Activated CD4-positive, alpha-beta memory T cell treated with anti-CD3 and anti-CD28 coated beads for 36 hours (primary cell): ENCODE measurements at regions of chr11 and their contacts with region 1.

Region 1: DNA sequence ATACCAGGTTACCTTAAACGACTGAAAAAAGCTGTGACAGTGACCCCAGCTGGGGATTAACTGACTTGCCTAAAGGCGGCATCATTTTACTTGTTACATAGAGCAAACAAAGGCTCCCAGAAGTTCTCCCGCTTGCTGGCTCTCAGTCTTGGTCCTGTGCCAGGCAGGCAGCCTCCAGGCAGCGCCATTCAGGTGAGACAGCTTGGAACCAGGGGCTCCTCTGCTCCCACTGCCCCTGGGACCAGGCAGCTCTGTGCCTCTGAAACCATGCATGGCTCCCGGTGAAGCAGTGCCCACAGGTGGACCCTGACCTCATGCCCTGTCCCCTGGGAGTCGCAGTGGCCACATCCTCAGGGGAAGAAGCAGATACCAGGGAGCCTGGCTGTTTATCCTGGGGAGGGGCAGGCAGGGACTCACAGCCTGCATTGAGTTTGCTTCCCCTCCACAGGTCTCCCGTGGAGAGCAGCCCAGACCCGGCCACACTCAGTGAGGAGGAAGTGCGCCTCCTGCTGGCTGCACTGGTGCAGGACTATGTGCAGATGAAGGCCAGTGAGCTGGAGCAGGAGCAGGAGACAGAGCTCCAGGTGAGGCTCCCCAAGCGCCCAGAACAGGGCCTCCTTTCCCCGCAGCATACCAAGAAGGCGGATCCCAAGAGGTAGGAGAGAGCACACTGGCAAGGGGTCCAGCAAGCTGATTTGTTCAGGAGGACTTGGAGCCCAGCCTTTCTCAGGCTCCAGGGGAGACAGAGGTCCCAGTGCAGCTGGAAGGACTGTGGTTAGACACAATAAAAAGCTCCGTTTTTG is 15.6 kb upstream of the CYP2R1 start:
- DNase-seq: peak; percentile 91
- H3K4me3 Mint-ChIP-seq: no peak overlapping the region
- H3K27ac Mint-ChIP-seq: no peak overlapping the region
- H3K4me1 Mint-ChIP-seq: peaks cover 36% of the 10 kb centered on the region
- H3K27me3 Mint-ChIP-seq: no peaks in the 10 kb centered on the region

Region 2: DNA sequence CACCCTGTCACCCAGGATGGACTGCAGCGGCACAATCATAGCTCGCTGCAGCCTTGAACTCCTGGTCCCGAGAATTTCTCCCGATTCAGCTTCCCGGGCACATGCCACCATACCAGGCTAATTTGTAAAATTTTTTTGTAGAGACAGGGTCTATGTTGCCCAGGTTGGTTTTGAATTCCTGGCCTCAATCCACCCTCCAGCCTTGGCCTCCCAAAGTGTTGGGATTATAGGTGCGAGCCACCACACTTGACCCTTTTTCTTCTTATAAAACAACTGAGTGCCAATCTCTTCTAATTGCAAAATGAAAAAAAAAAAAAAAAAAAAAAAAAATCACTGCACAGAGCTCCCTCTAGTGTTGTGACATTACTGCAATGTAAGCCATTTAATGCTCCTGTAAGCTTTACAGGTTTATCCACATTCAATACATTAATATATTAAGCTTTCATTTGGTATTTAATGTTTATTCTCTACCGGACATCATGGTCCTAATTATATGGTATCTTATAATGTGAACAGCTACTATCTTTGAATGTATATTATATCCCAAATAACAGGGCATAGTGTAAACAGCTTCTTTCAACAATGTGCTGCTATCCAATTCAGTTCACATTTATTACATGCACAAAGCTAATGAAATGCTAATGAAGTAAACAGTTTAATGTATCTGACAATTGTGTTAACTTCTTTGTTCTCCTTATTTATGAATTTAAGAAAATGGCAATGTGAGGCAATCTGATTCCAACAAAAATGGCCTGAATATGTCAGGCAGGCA is 452.6 kb before region 1 on chr11:
- CTCF ChIA-PET with region 1: interaction called, 10 read pairs
- POLR2A ChIA-PET with region 1: no interaction called
- intact Hi-C with region 1: no loop called
- DNase-seq: no peak
- H3K4me3 Mint-ChIP-seq: no peak overlapping the region
- H3K27ac Mint-ChIP-seq: no peak overlapping the region
- H3K4me1 Mint-ChIP-seq: no peaks in the 10 kb centered on the region
- H3K27me3 Mint-ChIP-seq: no peaks in the 10 kb centered on the region

Region 3: GRCh38 chr11:14578541-14578956 is 329.1 kb before region 1 on chr11:
- CTCF ChIA-PET with region 1: interaction called, 13 read pairs
- POLR2A ChIA-PET with region 1: no interaction called
- intact Hi-C with region 1: no loop called
- DNase-seq: peak; percentile 66
- H3K4me3 Mint-ChIP-seq: peak overlapping the region; percentile 54
- H3K27ac Mint-ChIP-seq: peak overlapping the region; percentile 86
- H3K4me1 Mint-ChIP-seq: peaks cover 49% of the 10 kb centered on the region
- H3K27me3 Mint-ChIP-seq: no peaks in the 10 kb centered on the region

Region 4: GRCh38 chr11:14588681-14589210 is 318.9 kb before region 1 on chr11:
- CTCF ChIA-PET with region 1: no interaction called
- POLR2A ChIA-PET with region 1: no interaction called
- intact Hi-C with region 1: no loop called
- DNase-seq: no peak
- H3K4me3 Mint-ChIP-seq: no peak overlapping the region
- H3K27ac Mint-ChIP-seq: no peak overlapping the region
- H3K4me1 Mint-ChIP-seq: peaks cover 16% of the 10 kb centered on the region
- H3K27me3 Mint-ChIP-seq: no peaks in the 10 kb centered on the region

Region 5: DNA sequence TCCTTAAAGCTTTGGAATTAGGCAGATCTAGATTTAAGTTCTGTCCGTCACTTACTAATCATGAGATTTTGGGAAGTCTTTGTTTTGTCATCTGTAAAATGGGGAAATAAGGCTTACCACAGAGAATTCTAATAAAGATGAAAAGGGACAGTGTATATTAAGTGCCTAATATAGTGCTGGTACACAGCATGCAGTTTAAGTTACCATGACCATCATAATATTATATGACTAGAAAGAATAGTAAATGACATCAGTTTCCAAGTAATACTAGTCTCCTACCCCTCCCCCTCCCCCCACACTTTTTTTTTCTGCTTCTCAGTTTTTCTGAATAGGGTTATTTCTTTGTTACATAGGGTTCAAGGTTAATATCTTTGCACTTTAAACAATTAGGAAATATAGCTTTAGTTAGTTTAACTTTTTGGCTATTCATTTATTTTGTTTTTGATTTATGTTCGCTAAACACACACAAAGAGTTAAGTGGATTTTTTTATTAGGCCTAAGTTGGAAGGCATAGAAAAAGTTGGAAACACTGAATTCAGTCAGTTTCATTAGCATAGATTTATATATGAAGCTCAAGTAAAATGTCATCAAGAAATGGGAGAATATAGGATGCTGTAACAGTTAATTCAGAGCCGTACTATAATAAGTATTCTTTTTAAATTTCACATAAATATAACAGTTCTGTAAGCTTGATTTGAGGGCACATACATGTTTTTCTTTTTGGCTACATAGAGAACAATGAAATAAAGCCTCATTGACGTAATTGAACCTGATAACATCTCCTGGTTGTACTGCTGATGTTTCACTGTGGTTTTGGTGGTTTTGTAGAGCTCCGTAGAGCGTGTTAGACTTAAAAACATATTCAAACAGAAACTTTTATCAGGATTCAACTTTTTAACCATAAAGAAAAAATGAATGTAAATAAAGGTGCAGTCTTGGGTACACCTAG is 142.8 kb before region 1 on chr11:
- CTCF ChIA-PET with region 1: interaction called, 20 read pairs
- POLR2A ChIA-PET with region 1: no interaction called
- intact Hi-C with region 1: no loop called
- DNase-seq: peak; percentile 31
- H3K4me3 Mint-ChIP-seq: peak overlapping the region; percentile 48
- H3K27ac Mint-ChIP-seq: no peak overlapping the region
- H3K4me1 Mint-ChIP-seq: peaks cover 30% of the 10 kb centered on the region
- H3K27me3 Mint-ChIP-seq: no peaks in the 10 kb centered on the region

Region 6: DNA sequence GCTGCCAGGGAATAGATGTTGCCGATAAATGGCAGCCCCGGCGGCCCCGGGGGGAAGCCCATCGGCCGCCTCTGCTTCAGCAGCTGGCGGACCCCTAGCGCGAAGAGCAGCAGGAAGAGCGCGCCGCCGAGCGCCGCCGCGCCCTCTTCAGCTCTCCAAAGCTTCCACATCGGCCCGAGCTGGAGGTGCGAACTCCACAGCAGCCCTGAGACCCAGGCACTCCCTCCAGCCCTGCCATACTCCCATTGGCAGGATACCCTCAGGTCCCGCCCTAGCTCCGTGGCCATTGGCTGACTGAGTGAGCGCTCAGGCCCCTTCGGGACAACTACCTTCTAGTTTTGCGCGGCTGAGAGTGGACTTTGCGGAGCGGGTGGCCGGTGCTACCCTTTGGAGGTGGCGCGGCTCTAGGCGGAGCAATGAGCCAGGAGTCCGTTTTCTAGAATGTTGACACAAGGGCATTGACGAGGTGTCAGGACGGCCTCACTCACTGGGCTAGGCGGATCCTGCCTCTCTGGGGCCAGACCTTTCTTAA is 15.5 kb before region 1 on chr11 and contains the start of gene CYP2R1:
- CTCF ChIA-PET with region 1: interaction called, 140 read pairs
- POLR2A ChIA-PET with region 1: interaction called, 7 read pairs
- intact Hi-C with region 1: loop called (anchors 1 kb)
- DNase-seq: peak; percentile 95
- H3K4me3 Mint-ChIP-seq: peak within 1 kb of the TSS; percentile 93
- H3K27ac Mint-ChIP-seq: peak within 1 kb of the TSS; percentile 100
- H3K4me1 Mint-ChIP-seq: peaks cover 47% of the 10 kb centered on the region
- H3K27me3 Mint-ChIP-seq: no peaks in the 10 kb centered on the region
- total RNA-seq, gene CYP2R1: 14.6 to 14.8 TPM

Region 7: DNA sequence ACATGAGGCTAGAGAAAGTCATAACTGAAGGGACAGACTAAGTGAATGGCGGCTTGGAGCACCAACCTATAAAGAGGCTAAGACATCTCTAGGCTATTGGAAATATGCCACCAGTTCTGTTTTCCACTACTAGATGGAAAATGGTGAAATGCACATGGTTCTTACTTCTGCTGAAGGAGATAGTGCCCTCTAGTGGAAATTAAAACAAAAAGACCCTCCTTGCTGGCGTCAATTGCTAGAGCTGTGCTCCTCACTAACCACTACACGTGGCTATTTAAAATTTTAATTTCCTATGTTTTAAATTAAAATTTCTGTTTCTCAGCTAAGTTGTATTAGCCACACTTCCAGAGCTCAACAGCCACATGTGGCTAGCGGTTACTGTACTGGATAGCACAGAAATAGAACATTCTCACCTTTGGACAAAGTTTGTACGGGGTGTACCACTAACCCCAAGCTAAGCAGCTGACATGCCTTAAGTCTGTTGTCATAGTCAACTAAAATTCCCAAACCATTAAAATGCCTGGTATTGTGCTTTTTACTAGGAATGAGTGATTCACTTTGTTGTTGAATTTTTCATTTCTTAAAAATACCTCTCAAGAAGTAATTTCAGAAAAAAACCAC is 98.6 kb after region 1 on chr11:
- CTCF ChIA-PET with region 1: interaction called, 156 read pairs
- POLR2A ChIA-PET with region 1: no interaction called
- intact Hi-C with region 1: loop called (anchors 1 kb)
- DNase-seq: peak; percentile 10
- H3K4me3 Mint-ChIP-seq: no peak overlapping the region
- H3K27ac Mint-ChIP-seq: no peak overlapping the region
- H3K4me1 Mint-ChIP-seq: peaks cover 2% of the 10 kb centered on the region
- H3K27me3 Mint-ChIP-seq: peaks cover 32% of the 10 kb centered on the region

Region 8: DNA sequence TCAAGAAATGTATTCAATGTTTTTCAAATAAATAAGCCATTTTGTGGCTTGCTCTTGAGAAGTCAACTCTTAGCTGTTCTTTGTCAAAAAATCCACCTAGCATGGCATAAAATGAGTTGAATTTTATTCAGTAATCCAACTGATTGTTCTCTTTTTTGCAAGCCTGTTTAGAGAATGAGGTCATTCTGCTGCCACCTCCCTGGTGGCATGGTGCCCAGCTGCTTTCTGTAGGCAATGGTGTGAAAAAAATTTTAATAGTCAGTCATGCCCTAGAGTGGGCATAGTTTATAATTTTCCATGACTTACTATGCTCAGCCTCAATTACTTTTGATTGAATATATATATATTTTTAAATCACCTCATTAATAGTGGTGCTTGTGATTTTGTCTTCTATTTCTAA is 384.3 kb after region 1 on chr11:
- CTCF ChIA-PET with region 1: no interaction called
- POLR2A ChIA-PET with region 1: no interaction called
- intact Hi-C with region 1: no loop called
- DNase-seq: no peak
- H3K4me3 Mint-ChIP-seq: no peak overlapping the region
- H3K27ac Mint-ChIP-seq: no peak overlapping the region
- H3K4me1 Mint-ChIP-seq: no peaks in the 10 kb centered on the region
- H3K27me3 Mint-ChIP-seq: peaks cover 2% of the 10 kb centered on the region